Gastrocnemius medialis (tissue), 4 donors: ENCODE measurements at regions of chr14 and their contacts with region 1.

Region 1: GRCh38 chr14:51006781-51007211 is 62.5 kb upstream of the PYGL start:
- DNase-seq: peak; percentile 82 to 92
- ATAC-seq: peak; percentile 95 to 97
- H3K4me3 ChIP-seq: no peak overlapping the region
- H3K27ac ChIP-seq: peak overlapping the region; percentile 72 to 88 (median 81)
- H3K4me1 ChIP-seq: peaks cover 34 to 65% of the 10 kb centered on the region in 2 donors
- H3K27me3 ChIP-seq: no peaks in the 10 kb centered on the region
- CTCF ChIP-seq: no peak
- POLR2A ChIP-seq: no peak

Region 2: GRCh38 chr14:50974118-50974517 is 32.7 kb before region 1 on chr14:
- in situ Hi-C with region 1: no loop called
- intact Hi-C with region 1: loop called (anchors 2 kb)
- DNase-seq: peak; percentile 66 to 92
- ATAC-seq: peak; percentile 81 to 87
- H3K4me3 ChIP-seq: no peak overlapping the region
- H3K27ac ChIP-seq: peak overlapping the region; percentile 53 to 87 (median 64)
- H3K4me1 ChIP-seq: peaks cover 25 to 35% of the 10 kb centered on the region in 2 donors
- H3K27me3 ChIP-seq: no peaks in the 10 kb centered on the region
- CTCF ChIP-seq: no peak
- POLR2A ChIP-seq: no peak

Region 3: DNA sequence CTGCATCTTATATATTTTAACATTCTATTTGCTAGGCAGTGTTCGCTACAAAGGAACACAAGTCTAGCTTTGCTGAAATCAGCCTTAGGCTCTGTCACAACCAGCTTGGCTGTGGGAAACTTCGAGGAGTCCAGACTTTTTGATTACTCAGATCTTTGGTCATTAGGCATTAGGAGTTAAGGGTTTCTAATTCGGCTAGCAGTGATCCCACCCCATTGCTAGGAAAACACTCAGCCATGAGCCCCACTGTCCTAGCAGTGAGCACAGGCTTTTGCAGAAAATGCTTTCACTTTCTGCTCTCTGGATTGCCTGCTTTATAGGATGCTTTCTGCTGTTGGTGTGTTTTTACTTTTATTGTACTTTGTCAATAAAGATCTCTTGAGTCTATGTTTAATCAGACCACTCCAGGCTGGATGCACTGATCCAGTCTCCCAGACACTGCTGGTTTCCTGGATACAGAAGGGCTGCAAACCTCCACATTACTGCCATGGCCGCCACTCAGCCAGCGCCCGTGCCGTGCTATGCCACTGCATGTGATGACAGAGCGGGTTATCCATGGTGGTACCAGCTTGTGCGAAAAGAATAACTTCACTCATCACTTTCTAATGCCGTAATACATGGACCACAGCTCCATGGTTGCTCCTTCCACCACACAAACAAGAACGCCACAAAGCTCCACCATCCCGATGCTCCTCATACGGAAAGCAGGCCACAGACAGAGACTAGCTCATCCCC is 21.5 kb before region 1 on chr14:
- in situ Hi-C with region 1: no loop called
- intact Hi-C with region 1: no loop called
- DNase-seq: no peak
- ATAC-seq: peak in 1 of 2 donors; percentile 27
- H3K4me3 ChIP-seq: no peak overlapping the region
- H3K27ac ChIP-seq: no peak overlapping the region
- H3K4me1 ChIP-seq: peaks cover 0 to 9% of the 10 kb centered on the region in 2 donors
- H3K27me3 ChIP-seq: no peaks in the 10 kb centered on the region
- CTCF ChIP-seq: no peak
- POLR2A ChIP-seq: no peak

Region 4: GRCh38 chr14:51094901-51095853 is 88.4 kb after region 1 on chr14 and contains the start of gene TRIM9:
- in situ Hi-C with region 1: no loop called
- intact Hi-C with region 1: loop called (anchors 2 kb)
- DNase-seq: peak; percentile 89 to 90
- ATAC-seq: peak; percentile 92 to 95
- H3K4me3 ChIP-seq: peak within 1 kb of the TSS; percentile 72 to 86 (median 80)
- H3K27ac ChIP-seq: peak within 1 kb of the TSS; percentile 58 to 67 (median 62)
- H3K4me1 ChIP-seq: peaks cover 14 to 28% of the 10 kb centered on the region in 2 donors
- H3K27me3 ChIP-seq: peaks cover 17 to 29% (median 25%) of the 10 kb centered on the region in 3 donors
- CTCF ChIP-seq: no peak
- POLR2A ChIP-seq: peak; percentile 18 to 46
- total RNA-seq, gene TRIM9: 0.26 to 3.0 (median 0.87) TPM

Region 5: DNA sequence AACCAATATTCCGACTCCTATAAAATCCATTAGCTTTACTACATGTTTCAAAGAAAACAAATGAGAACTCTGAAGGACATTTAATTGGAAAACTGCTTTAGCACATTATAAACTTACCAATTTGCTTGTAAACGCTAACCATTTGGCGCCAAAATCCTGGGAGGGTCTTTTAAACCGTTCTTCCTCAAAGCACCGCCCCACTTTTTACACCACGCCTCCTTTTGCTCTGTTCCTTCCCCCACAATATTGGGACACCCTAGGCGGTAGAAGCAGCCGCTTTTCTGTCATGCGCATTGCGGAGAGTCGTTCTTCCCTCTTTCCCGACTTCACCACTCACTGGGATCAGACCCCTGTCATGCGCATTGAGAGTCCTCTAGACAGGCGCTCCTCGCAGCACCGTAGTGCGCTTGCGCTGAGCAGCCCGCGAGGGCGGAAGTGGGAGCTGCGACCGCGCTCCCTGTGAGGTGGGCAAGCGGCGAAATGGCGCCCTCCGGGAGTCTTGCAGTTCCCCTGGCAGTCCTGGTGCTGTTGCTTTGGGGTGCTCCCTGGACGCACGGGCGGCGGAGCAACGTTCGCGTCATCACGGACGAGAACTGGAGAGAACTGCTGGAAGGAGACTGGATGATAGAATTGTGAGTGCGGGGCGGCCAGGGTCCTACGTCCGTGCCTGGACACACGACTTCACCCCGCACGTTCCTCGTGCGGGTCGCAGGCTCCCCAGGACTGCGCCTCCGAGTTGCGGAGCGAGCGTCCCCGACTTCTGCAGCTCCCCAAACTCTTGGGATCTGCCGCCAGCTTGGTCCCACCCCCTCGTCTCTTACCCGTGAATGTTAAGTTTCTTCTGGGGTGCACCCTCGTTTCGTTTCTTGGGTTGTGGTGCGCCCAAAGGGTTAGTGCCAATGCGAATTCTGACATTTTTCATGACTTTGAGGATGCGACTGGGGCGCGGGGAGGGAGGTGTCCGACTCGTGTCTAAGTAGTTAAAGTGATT is 233.3 kb after region 1 on chr14 and contains the start of gene TMX1:
- in situ Hi-C with region 1: no loop called
- intact Hi-C with region 1: loop called (anchors 5 kb)
- DNase-seq: peak; percentile 94 to 98
- ATAC-seq: peak; percentile 100
- H3K4me3 ChIP-seq: peak within 1 kb of the TSS; percentile 89 to 98 (median 94)
- H3K27ac ChIP-seq: peak within 1 kb of the TSS; percentile 81 to 90 (median 88)
- H3K4me1 ChIP-seq: peaks cover 11 to 21% of the 10 kb centered on the region in 2 donors
- H3K27me3 ChIP-seq: no peaks in the 10 kb centered on the region
- CTCF ChIP-seq: no peak
- POLR2A ChIP-seq: peak; percentile 70 to 80
- total RNA-seq, gene TMX1: 13.5 to 17.3 (median 15.7) TPM

Region 6: DNA sequence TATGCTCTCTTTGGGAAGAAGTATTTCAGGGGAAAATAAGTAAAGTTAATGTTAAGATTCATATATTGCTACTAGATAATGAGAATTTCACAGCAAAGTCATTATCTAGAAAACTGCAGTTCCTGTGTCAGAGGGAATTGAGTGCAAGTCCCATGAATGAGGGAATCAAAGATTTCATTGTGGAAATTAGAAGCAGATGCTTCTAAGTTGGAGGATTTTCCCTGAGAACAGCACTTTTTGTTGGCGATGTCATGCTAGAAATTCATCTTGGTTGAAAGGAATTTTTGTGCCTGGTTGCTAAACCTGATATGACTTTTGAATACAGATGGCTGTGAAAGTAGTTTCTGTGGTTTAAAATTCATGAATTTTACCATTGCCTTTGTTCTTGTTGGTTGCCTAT is 670.5 kb after region 1 on chr14:
- in situ Hi-C with region 1: no loop called
- intact Hi-C with region 1: no loop called
- DNase-seq: no peak
- ATAC-seq: no peak
- H3K4me3 ChIP-seq: no peak overlapping the region
- H3K27ac ChIP-seq: peak overlapping the region in 2 of 4 donors; percentile 21 to 43
- H3K4me1 ChIP-seq: peaks cover 13 to 28% of the 10 kb centered on the region in 2 donors
- H3K27me3 ChIP-seq: no peaks in the 10 kb centered on the region
- CTCF ChIP-seq: no peak
- POLR2A ChIP-seq: no peak